ENCODE measurements at regions of chr12 and their contacts with region 1.

Region 1: GRCh38 chr12:32051559-32052414 is 54.9 kb upstream of the BICD1 start:
- DNase-seq: no peak
- H3K4me3 ChIP-seq: no peak overlapping the region
- H3K27ac ChIP-seq: no peak overlapping the region
- H3K4me1 ChIP-seq: no peaks in the 10 kb centered on the region
- H3K27me3 ChIP-seq: no peaks in the 10 kb centered on the region
- CTCF ChIP-seq: no peak

Region 2: GRCh38 chr12:31682136-31682962 is 369.4 kb before region 1 on chr12:
- intact Hi-C with region 1: loop called (anchors 10 kb)
- DNase-seq: no peak
- H3K4me3 ChIP-seq: no peak overlapping the region
- H3K27ac ChIP-seq: no peak overlapping the region
- H3K4me1 ChIP-seq: no peaks in the 10 kb centered on the region
- H3K27me3 ChIP-seq: no peaks in the 10 kb centered on the region
- CTCF ChIP-seq: peak; percentile 42 to 55 (median 50)

Region 3: DNA sequence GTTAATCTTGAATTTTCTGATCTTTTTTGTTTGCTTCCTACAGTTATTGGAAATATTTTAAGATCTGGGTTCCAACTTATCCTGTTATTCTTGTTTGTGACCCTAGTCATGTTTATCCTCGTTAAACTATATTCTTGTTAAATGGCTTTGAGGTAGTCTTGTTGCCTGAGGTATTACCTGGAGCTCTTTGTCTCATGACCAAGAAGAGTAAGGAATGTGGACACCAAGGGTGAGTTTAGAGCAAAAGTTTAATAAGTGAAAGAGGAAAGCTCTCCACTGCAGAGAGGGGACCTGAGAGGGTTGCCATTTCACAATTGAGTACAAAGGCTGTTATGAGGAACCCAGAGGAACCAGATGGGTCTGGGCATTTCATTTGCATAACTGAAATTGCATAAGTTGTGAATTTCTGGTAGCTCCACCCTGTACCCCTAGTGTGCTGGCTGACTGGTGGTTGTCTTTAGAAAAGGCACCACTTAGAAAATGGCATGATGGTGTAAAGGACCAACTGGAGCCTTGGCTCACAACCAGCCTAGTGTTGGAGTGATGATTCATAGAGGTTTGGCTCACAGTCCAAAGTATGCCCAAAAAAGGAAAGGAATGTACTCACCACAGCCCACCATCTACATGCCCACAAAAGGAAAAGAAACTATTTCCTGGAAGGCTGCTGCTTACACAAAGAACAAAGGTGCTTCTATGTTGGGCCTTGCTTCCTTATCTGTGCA is 129.3 kb before region 1 on chr12:
- intact Hi-C with region 1: no loop called
- DNase-seq: no peak
- H3K4me3 ChIP-seq: no peak overlapping the region
- H3K27ac ChIP-seq: no peak overlapping the region
- H3K4me1 ChIP-seq: no peaks in the 10 kb centered on the region
- H3K27me3 ChIP-seq: no peaks in the 10 kb centered on the region
- CTCF ChIP-seq: no peak